ENCODE measurements at regions of chr11 and their contacts with region 1.

Region 1: GRCh38 chr11:70270104-70270876 is at the start of gene PPFIA1:
- DNase-seq: peak; percentile 99
- H3K4me3 Mint-ChIP-seq: peak within 1 kb of the TSS; percentile 96
- H3K27ac Mint-ChIP-seq: peak within 1 kb of the TSS; percentile 96
- H3K4me1 Mint-ChIP-seq: peaks cover 41% of the 10 kb centered on the region
- H3K27me3 Mint-ChIP-seq: peaks cover 9% of the 10 kb centered on the region
- CTCF ChIP-seq: no peak
- total RNA-seq, gene PPFIA1: 76.5 and 84.0 TPM in 2 replicates

Region 2: GRCh38 chr11:70233034-70233995 is 37.0 kb before region 1 on chr11:
- CTCF ChIA-PET with region 1: interaction called, 3 read pairs
- intact Hi-C with region 1: loop called (anchors 5 kb)
- DNase-seq: peak; percentile 86
- H3K4me3 Mint-ChIP-seq: peak overlapping the region; percentile 43
- H3K27ac Mint-ChIP-seq: peak overlapping the region; percentile 91
- H3K4me1 Mint-ChIP-seq: peaks cover 15% of the 10 kb centered on the region
- H3K27me3 Mint-ChIP-seq: no peaks in the 10 kb centered on the region
- CTCF ChIP-seq: no peak

Region 3: DNA sequence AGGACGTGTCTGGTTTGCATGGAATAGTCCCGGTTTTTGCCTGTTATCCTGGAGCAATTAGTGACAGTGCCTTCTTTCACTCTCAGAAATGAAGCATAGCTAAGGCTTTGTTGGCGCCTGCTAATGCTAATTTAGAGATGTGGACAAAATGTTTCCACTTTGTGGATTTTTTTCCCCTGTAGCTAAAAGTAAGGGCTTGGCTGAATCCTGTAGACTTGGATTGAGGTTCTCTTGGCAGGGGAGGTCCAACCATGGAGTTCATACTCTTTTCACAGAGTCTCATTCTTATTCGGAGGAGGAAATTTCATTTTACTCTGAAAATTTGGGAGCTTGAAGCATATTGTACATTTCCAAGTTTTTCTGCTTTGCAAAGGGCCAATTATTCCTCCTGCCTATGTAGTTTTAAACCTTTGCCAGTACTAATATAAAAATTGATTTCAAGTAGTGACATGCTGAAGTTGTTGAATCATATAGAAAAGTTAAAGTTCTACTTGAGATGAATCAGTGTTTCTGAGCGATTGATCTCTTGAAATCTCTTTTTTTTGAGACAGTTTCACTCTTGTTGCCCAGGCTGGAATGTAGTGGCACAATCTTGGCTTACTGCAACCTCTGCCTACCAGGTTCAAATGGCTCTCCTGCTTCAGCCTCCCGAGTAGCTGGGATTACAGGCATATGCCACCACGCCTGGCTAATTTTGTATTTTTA is 20.2 kb after region 1 on chr11:
- CTCF ChIA-PET with region 1: no interaction called
- intact Hi-C with region 1: no loop called
- DNase-seq: no peak
- H3K4me3 Mint-ChIP-seq: no peak overlapping the region
- H3K27ac Mint-ChIP-seq: no peak overlapping the region
- H3K4me1 Mint-ChIP-seq: no peaks in the 10 kb centered on the region
- H3K27me3 Mint-ChIP-seq: no peaks in the 10 kb centered on the region
- CTCF ChIP-seq: no peak

Region 4: GRCh38 chr11:70307176-70307575 is 36.9 kb after region 1 on chr11:
- CTCF ChIA-PET with region 1: no interaction called
- intact Hi-C with region 1: loop called (anchors 5 kb)
- DNase-seq: no peak
- H3K4me3 Mint-ChIP-seq: peak overlapping the region; percentile 57
- H3K27ac Mint-ChIP-seq: peak overlapping the region; percentile 99
- H3K4me1 Mint-ChIP-seq: peaks cover 57% of the 10 kb centered on the region
- H3K27me3 Mint-ChIP-seq: no peaks in the 10 kb centered on the region
- CTCF ChIP-seq: no peak

Region 5: DNA sequence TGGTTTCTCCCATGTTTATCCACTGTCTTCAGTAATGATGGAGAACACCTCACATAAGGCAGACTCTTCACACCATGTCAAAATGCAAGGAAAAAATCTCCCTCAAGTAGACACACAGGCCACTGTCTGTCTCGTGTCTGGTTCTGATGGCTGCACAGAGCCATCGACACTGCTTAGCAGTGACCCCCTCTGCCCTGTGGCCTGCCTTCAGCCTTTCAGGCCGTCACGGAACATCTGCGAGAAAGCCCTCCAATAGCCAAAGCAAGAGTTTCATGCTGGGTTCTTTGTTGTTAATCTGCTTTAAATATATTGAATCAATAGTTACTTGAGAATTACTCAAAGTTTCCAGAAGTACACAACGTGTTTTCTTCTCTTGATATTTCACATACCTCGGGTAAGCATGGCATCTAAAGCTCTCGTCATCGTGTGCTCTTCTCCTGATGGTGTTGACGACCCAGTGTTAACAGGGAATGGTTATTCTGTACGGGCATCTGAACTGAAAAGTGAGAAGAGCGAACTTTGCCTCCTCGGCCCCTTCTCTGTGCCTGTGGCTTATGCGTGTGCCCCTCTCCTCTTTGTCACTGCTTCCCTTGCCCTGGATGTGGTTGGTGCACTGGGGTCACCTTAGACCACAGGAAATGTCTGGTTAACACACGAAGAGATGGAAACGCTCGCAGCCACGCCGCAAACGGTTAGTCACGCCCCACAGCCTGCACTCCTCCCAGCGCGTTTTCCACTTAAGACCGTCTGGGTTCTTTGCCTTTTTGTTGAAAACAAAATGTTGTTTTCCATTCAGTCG is 94.7 kb after region 1 on chr11:
- CTCF ChIA-PET with region 1: no interaction called
- intact Hi-C with region 1: loop called (anchors 10 kb)
- DNase-seq: no peak
- H3K4me3 Mint-ChIP-seq: no peak overlapping the region
- H3K27ac Mint-ChIP-seq: no peak overlapping the region
- H3K4me1 Mint-ChIP-seq: no peaks in the 10 kb centered on the region
- H3K27me3 Mint-ChIP-seq: no peaks in the 10 kb centered on the region
- CTCF ChIP-seq: no peak

Measured in Calu3 (cell line).